ENCODE measurements at regions of chr15 and their contacts with region 1.

Region 1: DNA sequence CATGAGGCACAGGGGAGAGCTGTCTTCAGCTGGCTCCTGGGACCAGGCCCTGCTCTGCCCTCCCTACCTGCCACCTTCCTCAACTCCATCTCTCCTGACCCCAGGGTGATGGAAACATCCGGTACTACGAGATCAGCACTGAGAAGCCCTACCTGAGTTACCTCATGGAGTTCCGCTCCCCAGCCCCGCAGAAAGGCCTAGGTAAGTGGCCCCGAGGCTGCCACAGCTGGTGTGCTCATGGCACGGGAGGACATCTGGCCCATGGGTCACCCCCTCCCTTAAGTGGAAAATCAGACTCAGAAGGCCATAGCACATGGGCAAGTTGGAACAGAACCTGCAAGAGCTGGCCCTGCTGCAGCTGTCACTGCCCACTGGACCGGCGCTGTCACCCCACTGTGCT is 105.6 kb downstream of the ANP32A start:
- DNase-seq: no peak
- ATAC-seq: no peak
- H3K4me3 ChIP-seq: no peak overlapping the region
- H3K27ac ChIP-seq: no peak overlapping the region
- H3K4me1 ChIP-seq: no peaks in the 10 kb centered on the region
- CTCF ChIP-seq: no peak
- EP300 ChIP-seq: no peak
- POLR2A ChIP-seq: no peak
- RAD21 ChIP-seq: no peak

Region 2: DNA sequence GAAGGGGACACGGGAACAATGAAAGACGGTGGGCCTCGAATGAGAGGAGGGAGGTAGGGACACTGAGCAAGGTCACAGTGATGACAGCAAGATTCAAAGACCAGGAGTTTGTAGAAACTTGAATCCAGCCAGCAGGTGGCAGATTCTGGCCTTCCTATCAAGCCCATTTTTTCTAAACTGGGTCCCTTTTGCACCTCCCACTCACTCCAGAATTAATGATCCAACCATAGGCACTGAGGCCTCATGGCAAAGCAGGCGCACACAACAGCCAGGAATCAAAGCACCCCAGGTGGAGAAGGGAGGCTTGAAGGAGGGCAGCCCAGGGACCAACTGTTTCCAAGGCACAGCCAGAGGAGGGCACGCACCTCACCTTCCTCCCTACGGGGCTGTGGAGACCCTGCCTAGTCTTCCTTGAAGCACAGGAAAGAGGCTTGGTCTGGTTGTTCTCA is 15.4 kb after region 1 on chr15:
- CTCF ChIA-PET with region 1: interaction called, 16 read pairs
- POLR2A ChIA-PET with region 1: no interaction called
- DNase-seq: peak; percentile 31 to 68
- ATAC-seq: peak; percentile 44 to 81; a peak in 3 of 6 replicates
- H3K4me3 ChIP-seq: no peak overlapping the region
- H3K27ac ChIP-seq: no peak overlapping the region
- H3K4me1 ChIP-seq: no peaks in the 10 kb centered on the region
- CTCF ChIP-seq: peak; percentile 65
- EP300 ChIP-seq: no peak
- POLR2A ChIP-seq: no peak
- RAD21 ChIP-seq: peak; percentile 80